Natural killer cell (primary cell): ENCODE measurements at regions of chr2 and their contacts with region 1.

Region 1: DNA sequence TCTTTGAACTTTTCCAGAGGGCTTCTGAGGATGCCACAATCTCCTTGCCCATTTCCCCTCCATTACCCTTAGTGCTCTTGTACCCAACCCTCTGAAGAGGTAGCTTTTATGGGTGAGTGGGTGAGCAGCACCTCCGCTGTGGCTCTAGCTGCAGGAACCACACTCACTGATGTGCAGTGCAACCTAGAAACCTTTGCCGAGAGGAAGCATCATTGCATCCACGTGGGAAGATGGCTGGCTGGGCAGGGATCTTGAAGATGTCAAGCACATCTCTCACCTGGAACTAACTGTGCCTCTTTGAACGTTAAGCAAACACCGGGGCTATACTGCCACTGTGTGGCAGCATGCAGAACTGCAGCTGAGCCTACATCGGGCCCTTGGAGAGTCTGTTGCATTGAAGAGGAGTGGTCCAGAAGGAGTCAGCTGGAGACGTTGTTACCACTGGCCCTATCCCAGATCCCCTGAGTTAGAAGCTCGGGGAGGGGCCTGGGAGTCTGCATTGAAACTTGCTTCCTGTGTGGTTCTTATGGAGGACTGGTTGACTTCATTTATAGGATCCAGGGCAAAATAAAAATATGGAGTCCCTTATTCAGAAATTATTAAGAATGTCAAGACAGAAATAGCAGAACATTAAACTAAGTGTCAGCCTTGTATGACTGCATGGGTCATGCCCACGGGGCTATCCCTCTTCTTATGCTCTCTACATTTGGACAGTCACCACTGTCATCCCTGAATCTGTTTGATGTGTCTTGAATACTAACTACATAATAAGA is 28.7 kb downstream of the IGFBP5 start:
- DNase-seq: peak; percentile 66 to 83
- ATAC-seq: peak; percentile 86 to 99 (median 96)
- H3K4me3 ChIP-seq: no peak overlapping the region
- H3K4me3 Mint-ChIP-seq: no peak overlapping the region
- H3K27ac ChIP-seq: no peak overlapping the region
- H3K27ac Mint-ChIP-seq: no peak overlapping the region
- H3K4me1 ChIP-seq: no peaks in the 10 kb centered on the region
- H3K4me1 Mint-ChIP-seq: peaks cover 4 to 5% of the 10 kb centered on the region in 2 donors
- H3K27me3 ChIP-seq: no peaks in the 10 kb centered on the region
- H3K27me3 Mint-ChIP-seq: peaks cover 19 to 22% of the 10 kb centered on the region in 2 donors
- CTCF ChIP-seq: peak; percentile 97

Region 2: GRCh38 chr2:216519154-216519762 is 147.4 kb before region 1 on chr2:
- intact Hi-C with region 1: loop called (anchors 1 kb)
- DNase-seq: peak; percentile 29 to 77
- ATAC-seq: peak; percentile 72 to 84 (median 83)
- H3K4me3 ChIP-seq: no peak overlapping the region
- H3K4me3 Mint-ChIP-seq: no peak overlapping the region
- H3K27ac ChIP-seq: no peak overlapping the region
- H3K27ac Mint-ChIP-seq: no peak overlapping the region
- H3K4me1 ChIP-seq: no peaks in the 10 kb centered on the region
- H3K4me1 Mint-ChIP-seq: peaks cover 6 to 7% of the 10 kb centered on the region in 2 donors
- H3K27me3 ChIP-seq: no peaks in the 10 kb centered on the region
- H3K27me3 Mint-ChIP-seq: no peaks in the 10 kb centered on the region
- CTCF ChIP-seq: peak; percentile 89

Region 3: DNA sequence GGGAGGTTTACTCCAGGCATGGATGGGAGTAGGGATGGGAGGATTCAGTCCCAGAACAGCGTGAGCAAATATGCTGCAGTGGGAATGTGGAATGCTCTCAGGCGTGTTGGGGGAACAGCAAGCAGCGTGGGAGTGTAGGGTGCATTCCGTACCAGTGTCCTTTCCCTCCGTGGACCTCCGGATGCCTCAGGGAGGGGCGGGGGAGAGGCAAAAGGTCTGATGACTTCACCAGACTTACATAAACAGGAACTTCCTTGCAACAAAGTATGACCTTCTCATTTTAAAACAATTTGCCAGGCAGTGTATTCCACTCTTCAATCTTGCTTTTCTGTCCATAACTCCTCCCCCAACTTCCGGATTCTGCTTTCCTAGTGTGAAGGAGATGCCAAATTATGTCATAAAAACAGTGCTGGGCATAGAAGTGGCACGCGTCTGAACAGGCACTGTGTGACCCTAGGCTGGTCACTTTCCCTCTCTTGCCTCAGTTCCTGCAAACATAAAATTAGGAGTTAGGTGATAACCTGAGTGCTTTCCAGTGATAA is 131.1 kb before region 1 on chr2:
- intact Hi-C with region 1: no loop called
- DNase-seq: no peak
- ATAC-seq: peak in 1 of 3 donors; percentile 24
- H3K4me3 ChIP-seq: no peak overlapping the region
- H3K4me3 Mint-ChIP-seq: no peak overlapping the region
- H3K27ac ChIP-seq: no peak overlapping the region
- H3K27ac Mint-ChIP-seq: no peak overlapping the region
- H3K4me1 ChIP-seq: peaks cover 11% of the 10 kb centered on the region
- H3K4me1 Mint-ChIP-seq: peaks cover 29 to 30% of the 10 kb centered on the region in 2 donors
- H3K27me3 ChIP-seq: no peaks in the 10 kb centered on the region
- H3K27me3 Mint-ChIP-seq: no peaks in the 10 kb centered on the region
- CTCF ChIP-seq: no peak